GM18951 (cell line): ENCODE measurements at regions of chr7 and their contacts with region 1.

Region 1: GRCh38 chr7:74379938-74380337 is 73.8 kb upstream of the GTF2IRD1 start:
- POLR2A ChIP-seq: no peak

Region 2: GRCh38 chr7:74206589-74207120 is 173.3 kb before region 1 on chr7:
- in situ Hi-C with region 1: loop called (anchors 25 kb)
- POLR2A ChIP-seq: peak; percentile 17

Region 3: GRCh38 chr7:74294191-74294998 is 85.5 kb before region 1 on chr7:
- in situ Hi-C with region 1: no loop called
- POLR2A ChIP-seq: no peak